GM10248 (cell line): ENCODE measurements at regions of chr19 and their contacts with region 1.

Region 1: GRCh38 chr19:13262450-13262849 is 112.2 kb downstream of the IER2 start:
- DNase-seq: peak; percentile 65
- CTCF ChIP-seq: peak; percentile 52

Region 2: DNA sequence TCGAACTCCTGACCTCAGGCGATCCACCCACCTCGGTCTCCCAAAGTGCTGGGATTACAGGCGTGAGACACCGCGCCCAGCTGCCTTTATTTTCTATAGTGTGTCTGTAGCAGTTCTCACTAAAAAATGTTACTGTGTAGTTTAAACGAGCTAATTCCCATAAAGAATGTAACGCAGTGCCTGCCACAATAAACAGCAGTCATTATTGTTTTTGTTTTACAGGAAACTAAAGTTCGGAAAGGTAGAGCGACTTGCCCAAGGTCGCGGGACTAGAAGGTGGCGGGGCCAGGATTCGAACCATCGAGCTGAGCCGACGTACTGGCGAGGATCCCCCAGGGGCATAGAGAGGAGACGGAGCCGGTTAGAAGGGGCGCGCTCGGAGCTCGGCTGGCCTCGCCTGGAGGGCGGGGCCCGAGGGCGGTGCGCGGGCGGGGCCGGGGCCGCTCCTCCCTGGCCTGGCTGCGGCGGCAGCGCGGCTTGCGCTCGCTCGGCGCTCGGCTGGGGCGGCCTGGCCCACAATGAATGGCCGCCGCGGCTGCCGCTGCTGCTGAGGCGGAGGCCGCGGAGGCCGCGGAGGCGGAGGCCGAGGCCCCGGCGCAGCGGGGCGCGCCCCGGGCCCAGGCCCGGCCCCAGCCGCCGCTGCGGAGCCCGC is 144.6 kb before region 1 on chr19 and contains the start of gene NACC1:
- CTCF ChIA-PET with region 1: no interaction called
- POLR2A ChIA-PET with region 1: no interaction called
- DNase-seq: peak; percentile 98
- CTCF ChIP-seq: no peak

Region 3: DNA sequence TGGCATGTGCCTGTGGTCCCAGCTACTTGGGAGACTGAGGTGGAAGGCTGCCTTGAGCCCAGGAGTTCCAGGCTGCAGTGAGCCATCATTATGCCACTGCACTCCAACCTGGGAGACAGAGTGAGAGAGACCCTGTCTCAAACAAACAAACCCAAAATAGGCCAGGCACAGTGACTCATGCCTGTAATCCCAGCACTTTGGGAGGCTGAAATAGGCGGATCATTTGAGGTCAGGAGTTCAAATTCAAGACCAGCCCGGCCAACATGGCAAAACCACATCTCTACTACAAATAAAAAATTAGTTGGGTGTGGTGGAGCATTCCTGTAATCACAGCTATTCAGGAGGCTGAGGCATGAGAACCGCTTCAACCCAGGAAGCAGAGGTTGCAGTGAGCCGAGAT is 119.3 kb before region 1 on chr19:
- CTCF ChIA-PET with region 1: no interaction called
- POLR2A ChIA-PET with region 1: no interaction called
- DNase-seq: no peak
- CTCF ChIP-seq: no peak

Region 4: DNA sequence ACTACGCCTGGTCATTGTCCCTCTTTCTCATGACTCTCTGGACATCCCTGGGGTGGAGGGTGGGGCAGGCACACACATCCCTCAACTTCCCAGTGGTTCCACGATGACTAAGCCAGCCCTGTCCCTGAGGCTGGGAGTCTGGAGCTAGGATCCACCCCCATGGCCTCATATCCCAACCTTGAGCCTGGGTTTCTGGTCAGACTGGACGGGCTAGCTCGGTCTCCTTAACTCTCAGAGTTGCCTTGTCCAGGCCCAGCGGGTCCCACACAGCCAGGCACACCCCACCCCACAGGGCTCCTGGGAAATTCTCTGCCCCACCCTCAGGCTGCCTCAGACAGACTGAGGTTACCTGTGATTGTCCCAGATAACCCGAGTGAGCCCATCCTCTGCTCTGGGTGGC is 92.6 kb before region 1 on chr19:
- CTCF ChIA-PET with region 1: interaction called, 11 read pairs
- POLR2A ChIA-PET with region 1: no interaction called
- DNase-seq: peak; percentile 11
- CTCF ChIP-seq: no peak